ENCODE measurements at regions of chr7 and their contacts with region 1.

Region 1: DNA sequence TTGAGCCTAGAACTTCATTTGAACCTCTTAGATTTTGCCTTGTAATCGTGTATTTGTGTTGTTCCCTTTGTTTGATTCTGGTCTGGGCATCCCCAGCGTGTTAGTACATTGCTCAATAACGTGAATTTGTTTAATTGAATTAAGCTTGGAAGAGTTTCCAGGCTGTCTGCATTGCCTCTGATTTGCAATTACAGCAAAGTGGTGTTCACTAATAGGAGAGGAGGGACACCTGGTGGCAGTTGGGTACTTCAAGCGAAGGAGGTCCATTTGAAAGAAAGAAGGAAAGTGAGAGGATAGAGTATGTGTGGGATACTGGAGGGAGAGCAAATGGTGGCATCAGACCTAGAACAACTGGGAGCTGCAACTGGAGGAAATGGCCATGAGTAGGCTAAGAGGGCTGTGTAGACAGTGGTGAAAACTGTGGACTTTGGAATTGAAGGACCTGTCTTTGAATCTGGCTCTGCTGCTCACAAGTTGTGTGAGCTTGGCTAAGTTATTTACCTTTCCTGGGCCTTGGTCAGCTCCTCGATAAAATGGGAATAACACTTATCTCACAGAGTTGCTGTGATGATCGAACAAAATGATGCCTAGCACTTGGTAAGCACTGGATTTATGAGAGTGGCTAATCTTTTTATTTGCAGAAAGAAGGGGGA is 15.1 kb downstream of the LSMEM1 start:
- DNase-seq: peak in 1 of 2 donors; percentile 57
- ATAC-seq: peak; percentile 87
- H3K4me3 ChIP-seq: no peak overlapping the region
- H3K27ac ChIP-seq: no peak overlapping the region
- H3K4me1 ChIP-seq: no peaks in the 10 kb centered on the region
- H3K27me3 ChIP-seq: no peaks in the 10 kb centered on the region

Region 2: GRCh38 chr7:111756687-111757178 is 739.2 kb before region 1 on chr7:
- intact Hi-C with region 1: loop called in 1 of 2 experiments (anchors 5 kb)
- DNase-seq: peak; percentile 80 to 88
- ATAC-seq: peak; percentile 88
- H3K4me3 ChIP-seq: no peak overlapping the region
- H3K27ac ChIP-seq: no peak overlapping the region
- H3K4me1 ChIP-seq: peaks cover 0 to 4% of the 10 kb centered on the region in 2 donors
- H3K27me3 ChIP-seq: no peaks in the 10 kb centered on the region

Region 3: GRCh38 chr7:111855161-111855856 is 640.6 kb before region 1 on chr7:
- intact Hi-C with region 1: loop called in 1 of 2 experiments (anchors 10 kb)
- DNase-seq: no peak
- ATAC-seq: peak; percentile 71
- H3K4me3 ChIP-seq: no peak overlapping the region
- H3K27ac ChIP-seq: no peak overlapping the region
- H3K4me1 ChIP-seq: no peaks in the 10 kb centered on the region
- H3K27me3 ChIP-seq: no peaks in the 10 kb centered on the region

Region 4: DNA sequence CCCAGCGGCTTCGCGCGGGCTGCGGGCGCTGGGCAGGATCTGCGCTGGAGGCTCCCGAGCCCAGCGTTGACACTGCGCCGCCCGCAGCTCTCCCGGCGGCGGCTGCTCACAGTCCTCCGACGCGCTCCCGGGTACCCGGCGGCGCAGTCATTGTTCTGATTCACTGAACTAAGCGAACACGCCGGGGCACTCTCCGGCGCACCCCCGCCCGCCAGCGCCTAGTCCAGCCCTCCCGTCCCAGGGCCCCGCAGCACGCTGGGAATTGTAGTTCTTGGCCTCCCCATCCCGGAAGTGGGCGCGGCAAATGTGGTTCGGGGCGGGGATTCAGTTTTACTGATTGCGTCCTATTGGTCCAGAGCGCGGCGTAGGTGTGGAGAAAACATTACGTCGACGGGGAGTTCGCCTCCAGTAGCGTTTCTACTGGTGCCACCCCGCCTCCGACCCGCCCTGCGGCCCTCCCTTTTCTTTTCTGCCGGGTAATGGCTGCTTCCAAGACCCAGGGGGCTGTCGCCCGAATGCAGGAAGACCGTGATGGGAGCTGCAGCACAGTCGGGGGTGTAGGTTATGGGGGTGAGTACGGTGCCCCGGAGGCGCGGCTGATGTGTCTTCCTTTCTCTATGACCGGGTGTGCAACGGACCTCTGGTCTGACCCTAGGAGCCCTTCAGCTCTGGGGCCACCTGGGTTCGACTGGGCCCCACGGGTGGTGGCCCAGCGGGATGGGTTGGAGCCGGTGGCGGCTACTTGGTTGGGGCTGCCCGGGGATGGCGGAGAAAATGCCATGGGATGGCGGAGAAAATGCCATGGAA is 289.5 kb before region 1 on chr7 and contains the starts of genes DOCK4 and ZNF277:
- intact Hi-C with region 1: loop called in 1 of 2 experiments (anchors 5 kb)
- DNase-seq: peak; percentile 99 to 100
- ATAC-seq: peak; percentile 98
- H3K4me3 ChIP-seq: peak within 1 kb of the TSS; percentile 87 to 98
- H3K27ac ChIP-seq: peak within 1 kb of the TSS; percentile 18 to 75
- H3K4me1 ChIP-seq: no peaks in the 10 kb centered on the region
- H3K27me3 ChIP-seq: no peaks in the 10 kb centered on the region
- total RNA-seq, gene DOCK4: 34.2 to 94.3 TPM
- total RNA-seq, gene ZNF277: 20.3 to 21.6 TPM

Region 5: DNA sequence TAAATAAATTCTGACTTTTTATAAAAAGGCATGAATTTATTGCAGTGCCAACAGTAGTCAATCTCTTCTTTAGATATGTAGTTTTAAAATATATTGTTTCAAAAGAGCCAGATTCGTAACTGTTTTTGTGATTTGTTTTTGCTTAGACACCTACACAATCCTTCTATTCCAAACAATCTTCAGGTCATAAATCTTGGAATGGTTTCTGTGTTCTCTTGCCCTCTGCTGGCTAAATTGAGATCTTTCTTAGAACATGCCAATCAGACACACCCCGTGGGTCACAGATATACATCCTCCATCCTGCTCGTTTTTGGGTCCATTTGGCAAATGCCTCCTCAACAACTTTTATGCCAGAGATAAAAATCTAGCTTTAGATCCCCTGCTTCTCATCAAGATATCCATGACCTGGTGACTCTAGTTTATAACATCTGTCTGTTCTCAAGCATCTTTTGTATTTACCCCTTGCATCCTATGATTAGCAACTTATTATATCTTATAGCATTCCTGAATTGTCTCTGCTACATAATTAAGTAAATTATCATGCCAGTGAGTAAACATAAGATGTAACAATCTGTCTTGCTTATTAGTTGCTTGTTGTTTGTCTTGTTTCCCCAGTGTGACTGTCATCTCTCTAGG is 81.0 kb before region 1 on chr7:
- intact Hi-C with region 1: loop called in 1 of 2 experiments (anchors 10 kb)
- DNase-seq: no peak
- ATAC-seq: no peak
- H3K4me3 ChIP-seq: no peak overlapping the region
- H3K27ac ChIP-seq: no peak overlapping the region
- H3K4me1 ChIP-seq: no peaks in the 10 kb centered on the region
- H3K27me3 ChIP-seq: no peaks in the 10 kb centered on the region

Measured in aorta (tissue), 5 donors.